Activated naive CD8-positive, alpha-beta T cell treated with anti-CD3 and anti-CD28 coated beads, Interleukin-2, amount 10 ng/mL, durations not matched to agents 7 days and 5 days (primary cell): ENCODE measurements at regions of chr20 and their contacts with region 1.

Region 1: GRCh38 chr20:49797344-49797615 is 15.3 kb upstream of the SLC9A8 start:
- DNase-seq: no peak
- ATAC-seq: no peak
- H3K4me3 Mint-ChIP-seq: no peak overlapping the region
- H3K27ac Mint-ChIP-seq: no peak overlapping the region
- H3K4me1 Mint-ChIP-seq: peaks cover 26% of the 10 kb centered on the region
- H3K27me3 Mint-ChIP-seq: peaks cover 14% of the 10 kb centered on the region

Region 2: GRCh38 chr20:49812463-49813304 is 15.4 kb after region 1 on chr20 and contains the start of gene SLC9A8:
- POLR2A ChIA-PET with region 1: interaction called, 15 read pairs
- DNase-seq: peak; percentile 86
- ATAC-seq: peak; percentile 93
- H3K4me3 Mint-ChIP-seq: peak within 1 kb of the TSS; percentile 97
- H3K27ac Mint-ChIP-seq: peak within 1 kb of the TSS; percentile 85
- H3K4me1 Mint-ChIP-seq: peaks cover 23% of the 10 kb centered on the region
- H3K27me3 Mint-ChIP-seq: no peaks in the 10 kb centered on the region
- total RNA-seq, gene SLC9A8: 18.8 to 22.3 TPM

Region 3: GRCh38 chr20:49880177-49880576 is 82.9 kb after region 1 on chr20:
- POLR2A ChIA-PET with region 1: no interaction called
- DNase-seq: no peak
- ATAC-seq: no peak
- H3K4me3 Mint-ChIP-seq: no peak overlapping the region
- H3K27ac Mint-ChIP-seq: no peak overlapping the region
- H3K4me1 Mint-ChIP-seq: no peaks in the 10 kb centered on the region
- H3K27me3 Mint-ChIP-seq: no peaks in the 10 kb centered on the region